Calu3 (cell line): ENCODE measurements at regions of chr15 and their contacts with region 1.

Region 1: GRCh38 chr15:82999905-83000671 is 11.4 kb downstream of the C15orf40 start:
- DNase-seq: peak; percentile 39
- H3K4me3 Mint-ChIP-seq: peak overlapping the region; percentile 72
- H3K27ac Mint-ChIP-seq: peak overlapping the region; percentile 84
- H3K4me1 Mint-ChIP-seq: peaks cover 8% of the 10 kb centered on the region
- H3K27me3 Mint-ChIP-seq: no peaks in the 10 kb centered on the region
- CTCF ChIP-seq: peak; percentile 32

Region 2: GRCh38 chr15:82530606-82531379 is 469.3 kb before region 1 on chr15:
- CTCF ChIA-PET with region 1: interaction called, 7 read pairs
- intact Hi-C with region 1: loop called (anchors 2 kb)
- DNase-seq: peak; percentile 87
- H3K4me3 Mint-ChIP-seq: peak overlapping the region; percentile 46
- H3K27ac Mint-ChIP-seq: peak overlapping the region; percentile 23
- H3K4me1 Mint-ChIP-seq: peaks cover 13% of the 10 kb centered on the region
- H3K27me3 Mint-ChIP-seq: no peaks in the 10 kb centered on the region
- CTCF ChIP-seq: peak; percentile 95

Region 3: DNA sequence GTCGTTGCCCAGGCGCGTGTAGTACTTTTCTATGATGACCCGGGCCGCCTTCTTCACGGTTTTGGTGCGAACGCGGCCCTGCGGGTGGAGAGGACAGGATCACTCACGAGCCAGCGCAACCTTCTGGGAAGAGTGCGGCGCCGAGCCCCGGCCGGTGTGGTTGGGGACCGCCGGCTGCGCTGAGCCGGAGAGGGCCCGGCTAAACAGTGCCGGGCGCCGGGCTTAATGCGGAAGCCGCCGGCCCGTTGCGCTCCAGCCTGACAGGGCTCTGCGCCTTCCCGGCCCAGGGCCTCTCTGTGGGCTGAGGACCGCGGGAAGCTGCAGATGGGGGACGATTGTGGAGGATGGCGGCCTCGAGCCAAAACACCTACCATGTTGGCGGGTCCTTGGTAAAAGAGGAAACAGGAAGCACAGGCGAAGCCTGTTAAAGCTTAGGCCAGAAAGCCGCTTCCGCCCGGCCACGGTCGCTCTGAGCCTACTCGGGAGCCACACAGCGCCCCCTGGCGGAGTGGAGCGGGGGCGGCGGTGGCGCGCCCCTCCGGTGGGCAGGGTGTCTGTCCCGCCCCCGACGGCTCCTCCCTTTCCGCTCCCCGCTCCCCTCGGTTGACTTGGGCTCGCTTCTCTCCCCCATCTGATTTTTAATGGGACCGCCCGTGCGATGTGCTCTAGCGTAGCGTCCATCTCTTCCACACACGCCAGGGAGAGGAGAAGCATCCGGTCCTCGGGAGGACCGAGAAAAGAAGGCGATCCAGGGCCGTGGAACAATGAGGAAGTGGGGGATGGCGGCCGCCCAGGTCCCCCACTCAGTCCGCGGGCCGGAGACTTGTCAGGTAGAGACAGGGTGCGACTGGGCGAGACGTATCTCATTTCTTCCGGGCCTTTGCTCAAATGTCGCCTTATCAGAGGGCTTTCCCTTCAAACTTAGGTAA is 459.8 kb before region 1 on chr15 and contains the start of gene RPS17:
- CTCF ChIA-PET with region 1: no interaction called
- intact Hi-C with region 1: loop called (anchors 2 kb)
- DNase-seq: peak; percentile 99
- H3K4me3 Mint-ChIP-seq: peak within 1 kb of the TSS; percentile 98
- H3K27ac Mint-ChIP-seq: peak within 1 kb of the TSS; percentile 96
- H3K4me1 Mint-ChIP-seq: peaks cover 41% of the 10 kb centered on the region
- H3K27me3 Mint-ChIP-seq: no peaks in the 10 kb centered on the region
- CTCF ChIP-seq: peak; percentile 97
- total RNA-seq, gene RPS17: 1,584 and 1,695 TPM in 2 replicates

Region 4: GRCh38 chr15:82585072-82585471 is 415.0 kb before region 1 on chr15:
- CTCF ChIA-PET with region 1: interaction called, 3 read pairs
- intact Hi-C with region 1: loop called (anchors 5 kb)
- DNase-seq: no peak
- H3K4me3 Mint-ChIP-seq: no peak overlapping the region
- H3K27ac Mint-ChIP-seq: no peak overlapping the region
- H3K4me1 Mint-ChIP-seq: no peaks in the 10 kb centered on the region
- H3K27me3 Mint-ChIP-seq: no peaks in the 10 kb centered on the region
- CTCF ChIP-seq: no peak

Region 5: DNA sequence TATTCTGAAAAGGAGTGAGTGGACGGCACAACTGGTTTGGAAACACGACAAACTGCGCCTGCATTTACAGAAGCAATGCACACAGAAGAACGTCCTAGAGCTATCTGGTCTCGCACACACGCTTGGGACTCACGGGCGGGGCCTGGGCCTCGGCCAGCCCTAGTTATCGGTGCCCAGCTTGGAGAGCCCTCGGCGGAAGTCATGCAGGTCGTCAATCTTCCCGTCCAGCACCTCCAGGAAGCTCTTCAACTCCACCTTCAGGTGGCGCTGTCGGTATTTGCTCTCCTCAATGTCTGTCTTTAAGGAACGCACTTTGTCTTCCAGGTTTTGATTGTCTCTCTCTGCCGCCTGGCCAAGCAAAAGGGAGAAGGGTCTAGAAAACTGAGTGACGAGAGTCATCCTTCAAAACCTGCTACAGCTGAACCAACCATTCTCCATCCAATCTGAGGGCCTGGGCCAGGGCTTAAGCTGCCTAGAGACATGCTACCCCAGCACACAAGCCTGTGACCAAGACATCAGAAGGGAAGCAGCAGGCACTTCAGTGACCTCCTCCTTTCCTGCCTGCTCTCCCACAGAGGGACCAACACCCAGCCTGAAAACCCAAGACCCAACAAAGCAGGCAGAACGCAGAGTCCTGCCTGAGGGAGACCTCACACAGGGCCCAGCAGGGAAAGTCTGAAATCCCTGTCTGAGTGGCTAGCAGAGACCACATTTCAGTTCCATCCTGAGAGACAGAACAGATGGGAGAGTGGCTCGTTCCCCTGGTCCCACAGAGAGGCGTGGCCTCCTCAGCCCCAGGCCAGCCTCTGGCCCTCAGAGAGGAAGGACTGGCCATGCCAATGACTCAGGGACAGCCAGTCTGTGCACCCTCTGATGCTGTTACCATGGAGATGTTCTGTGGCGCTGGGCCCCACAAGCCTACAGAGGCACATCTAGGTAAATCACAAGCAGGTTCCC is 150.3 kb before region 1 on chr15:
- CTCF ChIA-PET with region 1: interaction called, 9 read pairs
- intact Hi-C with region 1: loop called (anchors 1 kb)
- DNase-seq: peak; percentile 59
- H3K4me3 Mint-ChIP-seq: no peak overlapping the region
- H3K27ac Mint-ChIP-seq: no peak overlapping the region
- H3K4me1 Mint-ChIP-seq: no peaks in the 10 kb centered on the region
- H3K27me3 Mint-ChIP-seq: no peaks in the 10 kb centered on the region
- CTCF ChIP-seq: peak; percentile 59

Region 6: GRCh38 chr15:82931221-82931620 is 68.9 kb before region 1 on chr15:
- CTCF ChIA-PET with region 1: no interaction called
- intact Hi-C with region 1: no loop called
- DNase-seq: no peak
- H3K4me3 Mint-ChIP-seq: no peak overlapping the region
- H3K27ac Mint-ChIP-seq: no peak overlapping the region
- H3K4me1 Mint-ChIP-seq: peaks cover 31% of the 10 kb centered on the region
- H3K27me3 Mint-ChIP-seq: no peaks in the 10 kb centered on the region
- CTCF ChIP-seq: no peak

Region 7: DNA sequence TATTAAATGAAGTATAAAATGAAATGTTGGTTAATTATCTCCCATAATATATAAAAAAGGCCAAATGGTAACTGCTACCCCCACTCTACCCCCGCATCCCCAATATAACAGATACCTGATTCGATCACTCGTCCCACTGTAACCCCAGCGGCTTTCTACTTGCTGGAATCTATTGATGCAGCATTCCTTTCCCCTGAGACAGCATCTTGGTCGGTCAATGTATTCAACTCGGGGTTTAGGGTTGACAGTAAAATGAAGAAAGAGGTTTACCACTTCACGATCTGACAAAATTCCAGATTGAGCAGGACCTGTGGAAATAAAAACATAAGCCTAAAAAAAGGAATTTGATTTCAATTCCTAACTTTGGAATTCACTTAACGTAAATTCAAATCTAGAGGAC is 29.9 kb after region 1 on chr15:
- CTCF ChIA-PET with region 1: no interaction called
- intact Hi-C with region 1: no loop called
- DNase-seq: peak; percentile 28
- H3K4me3 Mint-ChIP-seq: no peak overlapping the region
- H3K27ac Mint-ChIP-seq: no peak overlapping the region
- H3K4me1 Mint-ChIP-seq: peaks cover 16% of the 10 kb centered on the region
- H3K27me3 Mint-ChIP-seq: no peaks in the 10 kb centered on the region
- CTCF ChIP-seq: no peak